Activated B cell treated with CpG ODN at 0.5 μM for 24 hours (primary cell): ENCODE measurements at regions of chr1 and their contacts with region 1.

Region 1: DNA sequence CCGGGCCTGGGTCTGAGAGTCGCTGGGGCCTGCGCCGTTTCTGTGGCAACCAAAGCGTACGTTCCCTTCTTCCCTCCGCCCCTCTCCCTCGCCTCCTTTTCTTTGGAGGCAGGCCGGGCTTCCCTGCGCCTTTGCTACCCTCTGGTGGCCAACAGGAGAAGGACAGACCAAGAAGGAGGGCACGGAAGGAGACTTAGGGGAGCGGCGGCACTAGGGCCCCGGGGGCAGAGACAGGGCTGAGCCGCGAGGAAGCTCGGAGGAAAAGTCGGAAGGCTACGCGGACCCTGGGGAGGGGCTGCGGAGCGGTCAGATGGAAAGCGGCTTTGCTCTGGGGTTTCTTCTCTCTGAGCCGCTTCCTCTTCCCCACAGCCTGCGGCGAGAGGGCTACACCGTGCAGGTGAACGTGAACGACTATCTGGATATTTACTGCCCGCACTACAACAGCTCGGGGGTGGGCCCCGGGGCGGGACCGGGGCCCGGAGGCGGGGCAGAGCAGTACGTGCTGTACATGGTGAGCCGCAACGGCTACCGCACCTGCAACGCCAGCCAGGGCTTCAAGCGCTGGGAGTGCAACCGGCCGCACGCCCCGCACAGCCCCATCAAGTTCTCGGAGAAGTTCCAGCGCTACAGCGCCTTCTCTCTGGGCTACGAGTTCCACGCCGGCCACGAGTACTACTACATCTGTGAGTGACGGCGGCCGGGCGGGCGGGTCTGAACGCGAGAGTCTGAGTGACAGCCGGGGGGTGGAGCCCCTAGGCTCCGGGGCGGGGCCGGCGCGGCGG is 6.3 kb downstream of the EFNA3 start:
- DNase-seq: peak; percentile 95
- ATAC-seq: peak; percentile 77
- H3K4me3 Mint-ChIP-seq: peak overlapping the region; percentile 93
- H3K27ac Mint-ChIP-seq: peak overlapping the region; percentile 93
- H3K4me1 Mint-ChIP-seq: peaks cover 49% of the 10 kb centered on the region
- H3K27me3 Mint-ChIP-seq: peaks cover 25% of the 10 kb centered on the region
- CTCF ChIP-seq: peak; percentile 55

Region 2: GRCh38 chr1:154961497-154962262 is 123.2 kb before region 1 on chr1 and contains the start of gene PYGO2:
- CTCF ChIA-PET with region 1: interaction called, 3 read pairs
- POLR2A ChIA-PET with region 1: interaction called, 11 read pairs
- intact Hi-C with region 1: no loop called
- DNase-seq: peak; percentile 85
- ATAC-seq: peak; percentile 88
- H3K4me3 Mint-ChIP-seq: peak within 1 kb of the TSS; percentile 87
- H3K27ac Mint-ChIP-seq: peak within 1 kb of the TSS; percentile 86
- H3K4me1 Mint-ChIP-seq: peaks cover 45% of the 10 kb centered on the region
- H3K27me3 Mint-ChIP-seq: no peaks in the 10 kb centered on the region
- CTCF ChIP-seq: no peak
- total RNA-seq, gene PYGO2: 33.1 and 38.1 TPM in 2 replicates

Region 3: DNA sequence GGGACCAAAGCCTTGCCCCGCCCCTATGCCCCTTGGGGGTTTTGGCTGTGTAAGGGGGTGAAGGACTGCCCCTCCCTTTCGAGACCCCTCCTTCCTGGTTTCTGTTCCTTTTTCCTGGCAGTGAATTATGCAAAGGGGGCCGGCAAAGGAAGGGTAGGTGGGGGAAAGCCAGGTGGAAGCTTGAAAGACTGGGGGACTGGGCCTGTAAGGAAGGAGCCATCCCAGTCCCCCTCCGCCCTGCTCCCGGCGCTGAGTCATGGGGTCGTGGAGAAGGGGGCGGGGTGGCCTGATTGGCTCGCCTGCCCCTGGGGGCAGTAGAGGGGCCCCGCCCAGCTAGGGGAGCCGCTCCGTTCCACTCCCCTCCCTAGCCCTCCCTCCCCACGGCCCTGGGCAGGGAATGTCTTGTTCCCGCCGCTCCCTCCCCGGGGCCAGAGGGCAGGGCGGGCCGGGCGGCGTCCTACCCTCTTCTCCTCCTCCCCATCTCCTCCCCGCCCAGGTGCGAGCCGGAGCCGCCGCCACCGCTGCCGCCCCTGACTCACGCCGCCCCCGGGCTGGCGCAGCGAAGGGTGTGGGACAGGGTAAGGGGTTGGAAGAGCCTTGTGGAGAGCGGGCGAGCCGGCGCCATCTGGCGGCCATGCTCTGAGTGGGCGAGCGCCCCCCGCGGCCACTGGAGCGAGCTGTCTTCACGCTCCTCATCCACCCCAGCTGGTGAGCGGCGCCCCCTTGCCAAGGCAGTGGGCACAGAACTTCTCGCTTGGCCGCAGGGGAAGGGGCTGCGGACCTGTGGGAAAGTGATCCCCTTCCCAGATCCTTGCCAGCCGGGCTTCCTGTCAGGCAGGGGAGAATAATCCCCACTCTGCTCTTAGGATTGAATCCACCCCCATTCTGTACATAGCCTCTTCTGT is 67.6 kb before region 1 on chr1:
- CTCF ChIA-PET with region 1: interaction called, 4 read pairs
- POLR2A ChIA-PET with region 1: interaction called, 5 read pairs
- intact Hi-C with region 1: loop called (anchors 1 kb)
- DNase-seq: peak; percentile 88
- ATAC-seq: peak; percentile 77
- H3K4me3 Mint-ChIP-seq: peak overlapping the region; percentile 79
- H3K27ac Mint-ChIP-seq: peak overlapping the region; percentile 88
- H3K4me1 Mint-ChIP-seq: peaks cover 71% of the 10 kb centered on the region
- H3K27me3 Mint-ChIP-seq: no peaks in the 10 kb centered on the region
- CTCF ChIP-seq: no peak

Region 4: GRCh38 chr1:155029513-155030242 is 55.2 kb before region 1 on chr1:
- CTCF ChIA-PET with region 1: no interaction called
- POLR2A ChIA-PET with region 1: no interaction called
- intact Hi-C with region 1: no loop called
- DNase-seq: no peak
- ATAC-seq: no peak
- H3K4me3 Mint-ChIP-seq: no peak overlapping the region
- H3K27ac Mint-ChIP-seq: no peak overlapping the region
- H3K4me1 Mint-ChIP-seq: no peaks in the 10 kb centered on the region
- H3K27me3 Mint-ChIP-seq: no peaks in the 10 kb centered on the region
- CTCF ChIP-seq: no peak

Region 5: DNA sequence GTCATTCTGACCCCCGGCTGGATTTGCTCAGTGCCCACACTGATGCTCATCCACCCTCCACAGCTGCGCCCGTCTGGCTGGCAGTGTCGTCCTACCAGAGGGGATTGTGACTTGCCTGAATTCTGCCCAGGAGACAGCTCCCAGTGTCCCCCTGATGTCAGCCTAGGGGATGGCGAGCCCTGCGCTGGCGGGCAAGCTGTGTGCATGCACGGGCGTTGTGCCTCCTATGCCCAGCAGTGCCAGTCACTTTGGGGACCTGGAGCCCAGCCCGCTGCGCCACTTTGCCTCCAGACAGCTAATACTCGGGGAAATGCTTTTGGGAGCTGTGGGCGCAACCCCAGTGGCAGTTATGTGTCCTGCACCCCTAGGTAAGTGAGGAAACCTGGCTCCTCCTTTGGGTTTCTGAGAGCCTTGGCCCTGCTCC is 27.1 kb before region 1 on chr1:
- CTCF ChIA-PET with region 1: interaction called, 84 read pairs
- POLR2A ChIA-PET with region 1: interaction called, 54 read pairs
- intact Hi-C with region 1: no loop called
- DNase-seq: no peak
- ATAC-seq: no peak
- H3K4me3 Mint-ChIP-seq: no peak overlapping the region
- H3K27ac Mint-ChIP-seq: no peak overlapping the region
- H3K4me1 Mint-ChIP-seq: peaks cover 20% of the 10 kb centered on the region
- H3K27me3 Mint-ChIP-seq: no peaks in the 10 kb centered on the region
- CTCF ChIP-seq: no peak

Region 6: DNA sequence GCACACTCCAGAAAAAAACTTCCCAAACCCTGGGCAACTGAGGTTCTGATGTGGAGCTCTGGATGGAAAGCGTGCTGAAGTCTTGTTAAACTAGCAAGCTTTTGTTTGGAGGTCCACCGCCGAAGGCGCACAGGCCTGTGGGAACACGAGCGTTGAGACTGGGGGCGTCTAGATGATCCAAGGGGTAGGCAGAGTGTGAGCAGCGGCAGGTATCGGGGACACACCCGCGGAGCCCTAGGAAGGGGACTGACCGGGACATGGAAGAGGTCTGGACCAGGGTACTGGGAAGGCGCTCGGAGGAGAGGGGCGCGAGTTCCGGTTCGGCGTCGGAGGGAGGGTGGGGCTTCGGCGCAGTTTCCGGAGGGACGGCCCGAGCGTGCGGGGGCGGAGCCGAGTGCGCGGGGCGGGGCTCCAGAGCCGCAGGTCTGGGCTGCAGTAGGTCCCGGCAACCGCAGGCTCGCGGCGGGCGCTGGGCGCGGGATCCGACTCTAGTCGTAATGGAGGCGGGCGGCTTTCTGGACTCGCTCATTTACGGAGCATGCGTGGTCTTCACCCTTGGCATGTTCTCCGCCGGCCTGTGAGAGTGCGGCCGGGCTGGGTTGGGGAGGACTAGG is 50.6 kb after region 1 on chr1 and contains the start of gene SLC50A1:
- CTCF ChIA-PET with region 1: interaction called, 6 read pairs
- POLR2A ChIA-PET with region 1: interaction called, 23 read pairs
- intact Hi-C with region 1: loop called (anchors 1 kb)
- DNase-seq: peak; percentile 94
- ATAC-seq: peak; percentile 86
- H3K4me3 Mint-ChIP-seq: peak within 1 kb of the TSS; percentile 96
- H3K27ac Mint-ChIP-seq: peak within 1 kb of the TSS; percentile 99
- H3K4me1 Mint-ChIP-seq: peaks cover 46% of the 10 kb centered on the region
- H3K27me3 Mint-ChIP-seq: peaks cover 3% of the 10 kb centered on the region
- CTCF ChIP-seq: no peak
- total RNA-seq, gene SLC50A1: 77.3 and 85.2 TPM in 2 replicates

Region 7: DNA sequence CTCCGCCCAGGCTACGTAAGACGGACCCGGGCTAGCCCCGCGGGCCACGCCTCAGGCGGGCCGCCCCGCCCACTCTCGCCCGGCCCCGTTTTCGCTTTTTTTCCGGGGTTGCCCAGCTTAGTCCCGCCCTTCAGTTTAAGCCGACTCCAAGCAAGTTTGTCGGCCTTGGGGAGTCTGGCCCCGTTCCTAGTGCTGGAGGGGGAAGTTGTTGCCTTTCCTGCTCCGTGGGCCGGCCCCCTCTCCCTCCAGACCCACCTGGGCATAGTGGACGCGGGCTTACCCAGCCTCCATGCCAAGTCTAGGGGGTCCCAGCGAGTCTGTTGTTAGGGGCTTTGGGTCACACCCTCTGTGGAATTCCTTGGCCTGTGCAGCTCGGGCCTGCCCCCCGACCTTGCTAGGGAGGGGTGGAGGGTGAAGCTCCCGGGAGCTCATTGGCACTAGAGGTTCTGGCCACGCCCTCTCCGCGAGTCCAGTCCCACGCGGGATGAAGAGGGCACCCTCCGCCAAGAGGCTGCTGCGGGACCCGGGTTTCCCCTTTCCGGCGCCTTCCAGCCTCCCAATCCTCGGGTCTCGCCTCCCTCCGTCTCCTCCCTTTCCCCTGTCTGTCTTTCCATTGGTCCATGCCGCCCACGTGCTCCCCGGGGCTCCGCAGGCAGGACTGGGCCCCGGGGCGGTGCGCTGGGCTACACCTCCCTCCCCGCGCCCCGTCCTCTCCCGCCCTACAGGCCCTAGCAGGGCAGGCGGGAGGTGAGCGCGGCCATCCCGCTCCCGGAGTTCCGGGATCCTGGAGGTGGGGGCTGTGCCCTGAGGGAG is 239.1 kb after region 1 on chr1:
- CTCF ChIA-PET with region 1: no interaction called
- POLR2A ChIA-PET with region 1: no interaction called
- intact Hi-C with region 1: loop called (anchors 5 kb)
- DNase-seq: peak; percentile 81
- ATAC-seq: peak; percentile 78
- H3K4me3 Mint-ChIP-seq: peak overlapping the region; percentile 88
- H3K27ac Mint-ChIP-seq: peak overlapping the region; percentile 78
- H3K4me1 Mint-ChIP-seq: peaks cover 38% of the 10 kb centered on the region
- H3K27me3 Mint-ChIP-seq: no peaks in the 10 kb centered on the region
- CTCF ChIP-seq: no peak